Tibial artery (tissue), 4 donors: ENCODE measurements at regions of chrX and their contacts with region 1.

Region 1: GRCh38 chrX:103464774-103465117 is 54.5 kb downstream of the RAB40A start:
- DNase-seq: peak; percentile 71 to 79
- H3K4me3 ChIP-seq: peak overlapping the region; percentile 38 to 41
- H3K27ac ChIP-seq: no peak overlapping the region
- H3K4me1 ChIP-seq: no peaks in the 10 kb centered on the region
- H3K27me3 ChIP-seq: no peaks in the 10 kb centered on the region
- CTCF ChIP-seq: peak; percentile 59 to 66

Region 2: GRCh38 chrX:102535958-102536357 is 928.8 kb before region 1 on chrX:
- intact Hi-C with region 1: no loop called
- DNase-seq: no peak
- H3K4me3 ChIP-seq: no peak overlapping the region
- H3K27ac ChIP-seq: no peak overlapping the region
- H3K4me1 ChIP-seq: no peaks in the 10 kb centered on the region
- H3K27me3 ChIP-seq: no peaks in the 10 kb centered on the region
- CTCF ChIP-seq: no peak

Region 3: DNA sequence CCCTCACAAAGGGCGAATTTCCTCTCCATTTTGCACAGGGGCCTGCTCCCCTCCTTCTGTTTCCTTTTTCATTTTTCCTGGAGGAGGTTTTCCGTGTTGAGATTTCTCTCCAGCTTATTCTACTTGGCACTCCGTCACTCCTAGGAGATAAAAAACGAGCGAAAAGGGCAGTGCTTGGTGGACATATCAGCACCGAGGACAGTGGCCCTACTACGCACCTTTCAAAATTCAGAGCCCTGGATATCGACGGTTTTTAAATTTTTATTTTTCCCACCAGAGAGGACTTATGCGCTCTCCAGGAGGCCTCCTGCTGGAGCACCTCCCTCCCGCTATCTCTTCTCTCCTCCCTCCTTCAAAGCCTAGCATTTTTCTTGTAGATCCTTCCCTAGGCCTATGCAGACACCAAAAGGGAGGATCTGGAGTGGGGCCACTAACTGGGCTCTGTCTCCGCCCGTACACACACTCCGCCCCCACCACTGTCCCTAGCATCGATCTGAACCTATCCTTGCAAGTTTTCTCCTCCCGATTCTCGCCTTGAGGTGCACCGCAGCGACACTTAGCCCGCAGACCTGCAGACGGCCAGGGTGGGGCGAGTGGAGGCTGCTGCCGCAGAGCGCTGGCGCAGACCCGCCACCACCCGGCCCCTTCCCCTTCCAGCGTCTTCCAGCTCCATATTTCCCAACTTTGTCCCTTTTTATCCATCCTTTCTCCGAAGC is 116.9 kb before region 1 on chrX:
- intact Hi-C with region 1: loop called (anchors 5 kb)
- DNase-seq: no peak
- H3K4me3 ChIP-seq: no peak overlapping the region
- H3K27ac ChIP-seq: no peak overlapping the region
- H3K4me1 ChIP-seq: no peaks in the 10 kb centered on the region
- H3K27me3 ChIP-seq: peaks cover 0 to 10% of the 10 kb centered on the region in 2 donors
- CTCF ChIP-seq: no peak